MCF 10A (cell line): ENCODE measurements at regions of chr14 and their contacts with region 1.

Region 1: GRCh38 chr14:96297000-96297399 is 41.0 kb downstream of the BDKRB1 start:
- DNase-seq: peak; percentile 36
- H3K4me3 Mint-ChIP-seq: no peak overlapping the region
- H3K27ac Mint-ChIP-seq: no peak overlapping the region
- H3K4me1 Mint-ChIP-seq: no peaks in the 10 kb centered on the region
- H3K27me3 Mint-ChIP-seq: no peaks in the 10 kb centered on the region
- CTCF ChIP-seq: peak; percentile 45

Region 2: DNA sequence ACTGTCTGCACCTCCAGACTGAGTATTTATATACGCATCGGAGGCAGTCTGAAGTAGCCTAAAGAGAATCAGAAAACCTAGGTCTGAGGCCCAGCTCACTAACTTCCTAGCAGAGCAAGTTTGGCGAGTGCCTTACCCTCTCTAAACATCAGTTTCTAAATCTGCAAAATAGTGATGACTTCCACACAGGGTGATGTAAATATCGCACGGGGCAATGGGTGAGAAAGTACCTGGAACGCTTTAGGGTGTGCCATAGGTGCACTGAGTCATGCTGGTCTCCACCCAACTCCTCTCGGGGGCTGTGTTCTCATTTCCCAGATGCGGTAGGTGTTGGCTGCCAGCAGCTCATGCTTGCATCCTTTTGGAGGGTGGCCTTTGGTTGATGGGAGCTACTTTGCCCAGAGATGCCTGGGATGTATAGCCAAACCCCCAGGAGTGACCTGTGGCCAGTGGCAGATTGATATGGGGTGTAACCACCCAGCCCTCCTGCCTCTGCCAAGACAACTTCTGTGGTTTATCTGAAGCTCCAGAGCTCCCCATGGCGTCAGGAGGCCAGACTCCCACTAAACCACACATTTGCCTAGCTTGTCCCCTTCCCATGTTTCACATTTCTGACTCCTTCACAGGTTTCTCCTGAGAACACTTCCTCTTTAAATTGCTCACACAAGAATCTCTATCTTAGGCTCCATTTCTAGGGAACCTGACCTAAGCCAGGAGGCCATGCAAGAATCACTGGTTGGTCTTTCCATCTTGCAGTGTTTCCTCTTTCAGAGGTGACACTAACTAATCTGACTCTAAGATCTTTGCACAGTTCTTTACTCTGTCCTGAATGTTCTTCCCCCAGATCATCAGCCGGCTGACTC is 482.4 kb before region 1 on chr14:
- CTCF ChIA-PET with region 1: no interaction called
- POLR2A ChIA-PET with region 1: no interaction called
- intact Hi-C with region 1: no loop called
- DNase-seq: peak; percentile 5
- H3K4me3 Mint-ChIP-seq: no peak overlapping the region
- H3K27ac Mint-ChIP-seq: no peak overlapping the region
- H3K4me1 Mint-ChIP-seq: no peaks in the 10 kb centered on the region
- H3K27me3 Mint-ChIP-seq: peaks cover 45% of the 10 kb centered on the region
- CTCF ChIP-seq: no peak

Region 3: GRCh38 chr14:96053600-96054381 is 243.2 kb before region 1 on chr14:
- CTCF ChIA-PET with region 1: interaction called, 15 read pairs
- POLR2A ChIA-PET with region 1: no interaction called
- intact Hi-C with region 1: no loop called
- DNase-seq: peak; percentile 57
- H3K4me3 Mint-ChIP-seq: no peak overlapping the region
- H3K27ac Mint-ChIP-seq: no peak overlapping the region
- H3K4me1 Mint-ChIP-seq: peaks cover 5% of the 10 kb centered on the region
- H3K27me3 Mint-ChIP-seq: peaks cover 26% of the 10 kb centered on the region
- CTCF ChIP-seq: no peak

Region 4: GRCh38 chr14:96309896-96310330 is 12.9 kb after region 1 on chr14:
- CTCF ChIA-PET with region 1: interaction called, 20 read pairs
- POLR2A ChIA-PET with region 1: interaction called, 5 read pairs
- intact Hi-C with region 1: no loop called
- DNase-seq: no peak
- H3K4me3 Mint-ChIP-seq: no peak overlapping the region
- H3K27ac Mint-ChIP-seq: no peak overlapping the region
- H3K4me1 Mint-ChIP-seq: no peaks in the 10 kb centered on the region
- H3K27me3 Mint-ChIP-seq: no peaks in the 10 kb centered on the region
- CTCF ChIP-seq: no peak